ENCODE measurements at regions of chr15 and their contacts with region 1.

Region 1: DNA sequence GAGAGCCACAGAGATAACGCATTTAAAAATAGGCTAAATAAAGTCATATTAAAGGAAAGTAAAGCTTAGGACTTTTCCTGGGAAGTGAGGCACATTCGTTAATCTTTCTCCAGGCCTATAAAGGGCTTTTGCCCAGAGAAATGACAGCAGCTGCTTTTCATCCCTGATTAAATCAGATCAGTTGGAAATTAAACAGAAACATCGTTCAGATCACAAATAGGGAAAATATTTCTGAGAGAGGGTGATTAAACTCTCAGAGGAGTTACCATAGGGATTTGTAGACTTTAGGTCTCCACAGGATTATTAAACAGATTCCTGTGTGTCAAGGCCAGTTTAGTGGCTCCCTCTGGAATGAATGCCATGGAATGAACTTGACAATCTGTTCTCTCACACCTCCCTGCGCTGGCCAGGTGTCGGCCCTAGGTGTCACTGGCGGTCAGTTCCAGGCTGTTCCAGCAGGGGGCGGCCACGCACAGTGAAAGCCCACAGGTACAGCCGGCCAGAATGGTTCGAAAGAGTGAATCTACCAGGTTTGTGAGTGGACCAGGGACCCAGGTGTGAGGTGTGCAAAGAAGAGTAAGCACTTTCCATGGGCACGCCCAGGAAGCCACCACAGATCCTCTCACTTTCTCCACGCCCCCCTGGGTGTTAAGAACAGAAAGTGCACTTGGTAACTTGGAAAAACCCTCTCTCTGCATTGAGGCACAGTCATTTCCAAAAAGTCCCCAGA is 253.0 kb upstream of the RASGRP1 start:
- DNase-seq: peak; percentile 69 to 89 (median 74)
- ATAC-seq: peak; percentile 80 to 94 (median 91)
- H3K4me3 ChIP-seq: no peak overlapping the region
- H3K27ac ChIP-seq: peak overlapping the region in 1 of 12 donors; percentile 8
- H3K4me1 ChIP-seq: peaks cover 0 to 9% (median 0%) of the 10 kb centered on the region in 12 donors
- H3K27me3 ChIP-seq: no peaks in the 10 kb centered on the region
- CTCF ChIP-seq: peak; percentile 97 to 100 (median 98)
- POLR2A ChIP-seq: no peak

Region 2: DNA sequence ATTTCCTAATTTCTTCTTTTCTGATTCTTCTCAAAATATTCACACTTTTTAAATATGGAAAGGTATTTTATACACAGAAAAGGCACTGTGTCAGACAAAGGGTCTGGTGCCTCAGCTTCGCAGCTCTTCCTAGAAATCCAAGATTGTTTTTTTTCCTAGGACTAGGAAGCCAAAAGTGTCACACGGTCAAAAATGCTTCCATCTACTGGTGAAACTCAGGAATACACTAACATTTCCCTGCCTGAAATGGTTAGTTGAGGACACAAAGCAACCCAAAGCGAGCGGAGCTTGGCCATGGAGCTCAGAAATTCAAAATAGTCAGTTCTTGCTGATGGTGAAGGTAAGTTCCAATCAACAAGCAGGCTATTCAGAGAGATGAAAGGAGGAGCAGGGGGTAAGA is 173.5 kb after region 1 on chr15:
- intact Hi-C with region 1: loop called in 9 of 10 experiments (anchors 2 to 10 kb)
- DNase-seq: no peak
- ATAC-seq: peak in 1 of 4 donors; percentile 35
- H3K4me3 ChIP-seq: no peak overlapping the region
- H3K27ac ChIP-seq: peak overlapping the region in 6 of 12 donors; percentile 8 to 62 (median 25)
- H3K4me1 ChIP-seq: peaks cover 0 to 31% (median 12%) of the 10 kb centered on the region in 12 donors
- H3K27me3 ChIP-seq: no peaks in the 10 kb centered on the region
- CTCF ChIP-seq: peak in 11 of 12 donors; percentile 20 to 61 (median 46)
- POLR2A ChIP-seq: no peak

Region 3: GRCh38 chr15:39022532-39023305 is 205.1 kb after region 1 on chr15:
- intact Hi-C with region 1: loop called in 4 of 10 experiments (anchors 5 to 10 kb)
- DNase-seq: peak in 1 of 5 donors; percentile 14
- ATAC-seq: peak; percentile 78 to 96 (median 94)
- H3K4me3 ChIP-seq: no peak overlapping the region
- H3K27ac ChIP-seq: no peak overlapping the region
- H3K4me1 ChIP-seq: peaks cover 0 to 10% (median 0%) of the 10 kb centered on the region in 12 donors
- H3K27me3 ChIP-seq: no peaks in the 10 kb centered on the region
- CTCF ChIP-seq: peak in 2 of 12 donors; percentile 27 to 29
- POLR2A ChIP-seq: no peak

Region 4: DNA sequence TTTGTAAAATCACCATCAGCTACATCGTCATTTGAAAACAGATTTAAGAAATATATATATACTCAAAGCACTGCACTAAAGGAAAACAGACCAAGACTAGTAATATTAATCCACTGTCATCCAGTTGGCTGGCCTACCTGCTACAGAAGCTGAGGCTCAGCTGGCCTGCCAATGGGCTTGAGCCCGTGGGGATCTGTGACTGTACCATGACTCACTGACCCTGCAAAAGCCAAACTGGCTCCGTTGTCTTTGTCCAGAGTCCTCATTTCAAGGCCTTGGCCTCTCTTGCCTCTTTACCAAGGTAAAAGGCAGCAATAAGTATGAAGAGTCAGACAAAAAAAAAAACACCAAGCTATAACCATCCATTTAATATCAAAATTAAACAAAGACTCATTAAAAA is 210.5 kb after region 1 on chr15:
- intact Hi-C with region 1: loop called in 4 of 10 experiments (anchors 5 to 10 kb)
- DNase-seq: peak in 3 of 5 donors; percentile 46 to 66 (median 58)
- ATAC-seq: peak in 2 of 4 donors; percentile 66 to 90
- H3K4me3 ChIP-seq: no peak overlapping the region
- H3K27ac ChIP-seq: no peak overlapping the region
- H3K4me1 ChIP-seq: peaks cover 0 to 4% (median 0%) of the 10 kb centered on the region in 12 donors
- H3K27me3 ChIP-seq: no peaks in the 10 kb centered on the region
- CTCF ChIP-seq: no peak
- POLR2A ChIP-seq: no peak

Region 5: GRCh38 chr15:39132954-39133600 is 315.5 kb after region 1 on chr15:
- intact Hi-C with region 1: loop called in 1 of 10 experiments (anchors 10 kb)
- DNase-seq: no peak
- ATAC-seq: peak in 1 of 4 donors; percentile 9
- H3K4me3 ChIP-seq: no peak overlapping the region
- H3K27ac ChIP-seq: peak overlapping the region in 1 of 12 donors; percentile 61
- H3K4me1 ChIP-seq: peaks cover 0 to 15% (median 6%) of the 10 kb centered on the region in 12 donors
- H3K27me3 ChIP-seq: no peaks in the 10 kb centered on the region
- CTCF ChIP-seq: no peak
- POLR2A ChIP-seq: no peak

Measured in heart left ventricle (tissue), 16 donors.